ENCODE measurements at regions of chr12 and their contacts with region 1.

Region 1: DNA sequence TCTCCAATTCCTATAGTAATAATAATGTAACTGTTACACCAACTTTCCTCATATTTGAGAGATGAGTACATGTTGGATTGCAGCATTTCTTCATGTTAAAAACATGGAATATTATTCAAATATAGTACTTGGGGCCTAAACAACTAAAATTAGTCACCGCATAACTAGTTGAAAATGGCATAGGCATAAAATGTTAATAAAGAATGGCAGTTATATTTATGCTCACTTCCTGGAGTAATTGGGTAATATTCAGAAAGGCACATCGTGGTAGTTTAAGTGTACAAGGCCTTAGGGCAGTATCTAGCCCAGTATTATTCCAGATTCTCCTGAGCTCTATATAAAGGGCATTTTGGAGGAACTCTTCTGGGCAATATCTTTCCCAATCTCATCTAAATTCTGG is 46.0 kb downstream of the ERGIC2 start:
- DNase-seq: no peak
- H3K4me3 ChIP-seq: no peak overlapping the region
- H3K27ac ChIP-seq: no peak overlapping the region
- H3K4me1 ChIP-seq: no peaks in the 10 kb centered on the region
- H3K27me3 ChIP-seq: no peaks in the 10 kb centered on the region
- CTCF ChIP-seq: no peak

Region 2: DNA sequence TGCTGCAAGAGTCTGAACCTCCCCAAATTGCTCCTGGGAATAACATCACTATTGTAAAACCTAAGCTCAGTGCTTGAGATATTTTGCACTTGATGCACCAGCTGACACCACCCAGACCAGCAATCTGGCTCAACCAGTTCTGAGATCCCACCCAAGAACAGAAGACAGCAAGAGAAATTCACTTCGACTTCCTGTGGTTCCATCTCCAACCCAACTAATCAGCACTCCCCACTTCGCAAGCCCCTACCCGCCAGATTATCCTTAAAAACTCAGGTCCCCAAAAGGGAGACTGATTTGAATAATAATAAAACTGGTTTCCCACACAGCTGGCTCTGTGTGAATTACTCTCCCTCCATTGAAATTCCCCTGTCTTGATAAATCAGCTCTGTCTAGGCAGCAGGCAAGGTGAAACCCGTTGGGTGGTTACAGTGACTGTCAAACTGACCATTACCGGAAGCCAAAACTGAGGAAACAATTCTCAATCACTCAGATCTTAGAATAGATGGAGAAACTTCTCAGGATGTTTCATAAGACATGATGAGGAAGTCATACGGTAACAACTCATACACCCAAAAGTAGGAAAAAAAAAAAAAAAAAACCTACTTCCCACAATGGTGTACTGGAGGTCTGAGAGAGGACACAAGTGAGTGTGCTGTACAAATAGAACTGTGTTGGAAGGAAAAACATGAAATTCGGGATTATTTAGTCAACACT is 356.4 kb after region 1 on chr12:
- CTCF ChIA-PET with region 1: no interaction called
- POLR2A ChIA-PET with region 1: no interaction called
- intact Hi-C with region 1: no loop called
- DNase-seq: no peak
- H3K4me3 ChIP-seq: no peak overlapping the region
- H3K27ac ChIP-seq: peak overlapping the region; percentile 36; the same call in 1 of the 2 replicates
- H3K4me1 ChIP-seq: peaks cover 10% of the 10 kb centered on the region
- H3K27me3 ChIP-seq: no peaks in the 10 kb centered on the region
- CTCF ChIP-seq: no peak

Region 3: DNA sequence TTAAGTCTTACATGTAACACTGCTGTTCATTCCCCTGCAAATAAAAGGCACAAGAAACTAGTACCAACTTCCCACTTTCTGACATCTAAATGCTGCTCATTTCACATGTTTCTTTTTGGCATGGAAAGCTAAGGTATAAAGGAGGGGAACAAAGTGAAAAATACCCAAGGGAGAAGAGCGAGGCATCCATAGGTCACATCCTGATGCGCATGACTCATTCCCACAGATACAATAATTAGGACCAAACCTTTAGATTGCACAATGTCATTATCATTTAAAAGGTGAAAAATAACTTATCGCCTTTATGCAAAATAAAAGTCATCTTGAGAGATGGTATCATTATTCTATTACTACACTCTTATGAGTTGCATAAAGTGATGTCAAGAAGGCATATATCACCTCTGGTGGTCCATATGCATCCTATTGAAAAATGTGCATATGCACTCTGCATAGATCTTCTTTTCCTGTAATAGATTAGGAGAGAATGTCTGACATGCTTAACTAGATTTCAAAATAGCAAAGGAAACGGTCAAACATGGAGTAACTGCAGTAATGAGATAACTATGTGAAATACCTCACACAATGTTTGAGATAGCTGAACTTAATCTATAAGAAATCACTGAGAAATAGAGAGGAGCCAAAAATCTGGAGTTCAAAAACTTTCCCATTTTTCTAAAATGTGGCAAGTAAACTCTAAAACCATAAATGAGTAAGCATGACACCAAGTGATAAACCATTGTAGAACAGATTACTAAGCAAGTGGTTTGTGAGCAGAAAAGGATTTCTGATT is 831.3 kb after region 1 on chr12:
- CTCF ChIA-PET with region 1: interaction called, 14 read pairs
- POLR2A ChIA-PET with region 1: no interaction called
- intact Hi-C with region 1: no loop called
- DNase-seq: no peak
- H3K4me3 ChIP-seq: no peak overlapping the region
- H3K27ac ChIP-seq: no peak overlapping the region
- H3K4me1 ChIP-seq: no peaks in the 10 kb centered on the region
- H3K27me3 ChIP-seq: no peaks in the 10 kb centered on the region
- CTCF ChIP-seq: no peak

Measured in PC-9 (cell line).